PC-9 (cell line): ENCODE measurements at regions of chr12 and their contacts with region 1.

Region 1: DNA sequence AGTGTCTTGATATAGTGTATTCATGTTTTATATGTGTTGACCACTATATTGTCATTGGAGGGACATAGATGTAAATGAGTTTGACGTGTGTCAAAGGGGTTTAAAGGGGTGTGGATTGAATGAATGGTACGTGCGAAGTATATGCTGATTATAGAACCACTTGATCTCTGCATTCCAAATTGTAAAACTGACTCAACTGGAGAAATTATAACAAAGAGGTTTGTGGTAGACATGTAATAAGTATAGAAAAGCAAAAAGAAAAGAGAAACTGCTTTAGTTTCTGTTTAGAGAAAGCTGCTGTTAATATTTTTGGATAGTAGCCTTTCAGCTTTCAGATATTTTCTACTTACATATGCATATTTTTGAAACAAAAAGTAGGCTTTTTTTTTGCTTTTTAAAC is 8.9 kb upstream of the MYRFL start:
- DNase-seq: no peak
- H3K4me3 ChIP-seq: no peak overlapping the region
- H3K27ac ChIP-seq: no peak overlapping the region
- H3K4me1 ChIP-seq: no peaks in the 10 kb centered on the region
- H3K27me3 ChIP-seq: no peaks in the 10 kb centered on the region
- CTCF ChIP-seq: no peak

Region 2: DNA sequence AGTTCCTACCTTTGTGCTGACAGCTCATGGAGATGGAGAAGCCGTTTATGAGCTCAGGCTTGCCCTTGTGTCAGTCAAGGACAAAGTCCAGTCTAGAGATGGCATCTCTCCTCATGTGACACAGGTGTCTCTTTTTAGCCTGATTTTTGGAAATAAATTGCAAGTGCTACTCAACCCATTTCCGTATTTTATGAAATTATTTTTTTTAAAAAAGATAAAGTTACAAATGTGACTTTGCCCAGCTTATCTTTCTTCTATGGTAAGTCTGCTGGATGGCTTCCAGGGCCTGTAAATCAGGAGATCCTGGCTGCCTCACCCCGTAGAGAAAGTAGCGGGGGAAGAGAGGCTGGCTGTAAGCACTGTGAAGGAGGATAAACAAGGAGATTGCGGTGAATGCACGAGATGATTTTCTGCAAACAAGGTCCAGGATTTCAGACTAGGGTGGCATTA is 178.7 kb after region 1 on chr12:
- CTCF ChIA-PET with region 1: no interaction called
- POLR2A ChIA-PET with region 1: interaction called, 12 read pairs
- intact Hi-C with region 1: no loop called
- DNase-seq: no peak
- H3K4me3 ChIP-seq: no peak overlapping the region
- H3K27ac ChIP-seq: no peak overlapping the region
- H3K4me1 ChIP-seq: no peaks in the 10 kb centered on the region
- H3K27me3 ChIP-seq: no peaks in the 10 kb centered on the region
- CTCF ChIP-seq: no peak